BJ (cell line): ENCODE measurements at regions of chr19 and their contacts with region 1.

Region 1: DNA sequence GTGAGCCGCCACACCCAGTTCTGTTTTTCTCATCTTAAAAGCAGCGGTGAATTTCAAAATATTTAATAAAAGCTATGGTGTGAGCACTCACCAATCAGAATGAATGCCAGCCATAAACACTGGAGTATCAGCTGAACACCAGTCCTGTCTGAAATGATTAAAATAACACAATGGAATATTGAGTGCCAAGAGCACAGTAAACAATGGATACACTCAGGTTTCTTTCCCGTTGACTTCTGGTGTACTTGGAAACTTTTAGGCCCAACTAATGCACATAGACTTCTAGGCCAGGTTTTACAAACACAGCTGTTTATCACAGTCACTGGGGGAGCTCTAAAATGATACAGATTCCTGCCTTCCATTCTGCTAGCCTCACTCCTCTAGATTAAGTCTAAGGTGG is 68.3 kb downstream of the SLC6A16 start:
- DNase-seq: no peak
- H3K4me3 ChIP-seq: no peak overlapping the region
- H3K27me3 ChIP-seq: no peaks in the 10 kb centered on the region
- CTCF ChIP-seq: no peak

Region 2: DNA sequence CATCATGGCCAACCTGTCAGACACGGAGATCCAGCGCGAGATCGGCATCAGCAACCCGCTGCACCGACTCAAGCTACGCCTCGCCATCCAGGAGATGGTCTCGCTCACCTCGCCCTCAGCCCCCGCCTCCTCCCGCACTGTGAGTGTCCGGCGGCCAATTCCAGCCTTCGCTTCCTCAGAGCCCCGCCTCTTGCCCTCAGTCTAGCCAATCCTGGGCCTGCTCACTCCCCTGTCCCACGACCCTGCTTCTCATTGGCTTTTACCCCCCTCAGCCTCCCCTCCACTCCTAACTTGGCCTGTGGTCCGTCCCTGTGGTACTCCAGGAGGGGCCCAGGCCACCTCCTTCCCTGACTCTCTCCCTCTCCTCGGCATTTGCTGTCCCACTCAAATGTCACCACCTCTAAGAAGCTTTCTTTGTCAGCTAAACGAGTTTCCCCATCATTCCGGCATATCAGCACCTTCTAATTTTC is 113.8 kb before region 1 on chr19:
- CTCF ChIA-PET with region 1: no interaction called
- POLR2A ChIA-PET with region 1: no interaction called
- DNase-seq: peak; percentile 56
- H3K4me3 ChIP-seq: peak overlapping the region; percentile 68
- H3K27me3 ChIP-seq: no peaks in the 10 kb centered on the region
- CTCF ChIP-seq: no peak

Region 3: DNA sequence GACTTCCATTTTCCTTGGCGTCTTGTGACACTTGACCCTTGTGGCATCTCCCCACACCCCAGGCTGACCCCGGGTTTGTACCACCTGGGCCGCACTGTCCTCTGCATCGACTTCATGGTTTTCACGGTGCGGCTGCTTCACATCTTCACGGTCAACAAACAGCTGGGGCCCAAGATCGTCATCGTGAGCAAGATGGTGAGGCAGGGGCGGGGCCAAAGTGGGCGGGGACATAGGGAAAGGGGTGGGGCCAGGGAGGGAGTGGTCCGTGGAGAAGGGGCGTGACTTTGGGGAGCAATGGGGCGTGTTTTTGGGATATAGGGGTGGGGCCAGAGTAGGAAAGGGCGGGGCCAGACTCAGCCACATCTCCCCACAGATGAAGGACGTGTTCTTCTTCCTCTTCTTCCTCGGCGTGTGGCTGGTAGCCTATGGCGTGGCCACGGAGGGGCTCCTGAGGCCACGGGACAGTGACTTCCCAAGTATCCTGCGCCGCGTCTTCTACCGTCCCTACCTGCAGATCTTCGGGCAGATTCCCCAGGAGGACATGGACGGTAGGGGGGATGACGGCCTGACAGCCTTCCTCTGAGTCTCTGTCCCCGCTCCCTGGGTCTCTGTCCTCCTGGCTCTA is 56.3 kb before region 1 on chr19:
- CTCF ChIA-PET with region 1: no interaction called
- POLR2A ChIA-PET with region 1: no interaction called
- DNase-seq: no peak
- H3K4me3 ChIP-seq: no peak overlapping the region
- H3K27me3 ChIP-seq: no peaks in the 10 kb centered on the region
- CTCF ChIP-seq: no peak

Region 4: GRCh38 chr19:49272184-49272583 is 15.5 kb after region 1 on chr19:
- CTCF ChIA-PET with region 1: interaction called, 10 read pairs
- POLR2A ChIA-PET with region 1: no interaction called
- DNase-seq: peak; percentile 50
- H3K4me3 ChIP-seq: no peak overlapping the region
- H3K27me3 ChIP-seq: no peaks in the 10 kb centered on the region
- CTCF ChIP-seq: no peak